ENCODE measurements at regions of chr2 and their contacts with region 1.

Region 1: DNA sequence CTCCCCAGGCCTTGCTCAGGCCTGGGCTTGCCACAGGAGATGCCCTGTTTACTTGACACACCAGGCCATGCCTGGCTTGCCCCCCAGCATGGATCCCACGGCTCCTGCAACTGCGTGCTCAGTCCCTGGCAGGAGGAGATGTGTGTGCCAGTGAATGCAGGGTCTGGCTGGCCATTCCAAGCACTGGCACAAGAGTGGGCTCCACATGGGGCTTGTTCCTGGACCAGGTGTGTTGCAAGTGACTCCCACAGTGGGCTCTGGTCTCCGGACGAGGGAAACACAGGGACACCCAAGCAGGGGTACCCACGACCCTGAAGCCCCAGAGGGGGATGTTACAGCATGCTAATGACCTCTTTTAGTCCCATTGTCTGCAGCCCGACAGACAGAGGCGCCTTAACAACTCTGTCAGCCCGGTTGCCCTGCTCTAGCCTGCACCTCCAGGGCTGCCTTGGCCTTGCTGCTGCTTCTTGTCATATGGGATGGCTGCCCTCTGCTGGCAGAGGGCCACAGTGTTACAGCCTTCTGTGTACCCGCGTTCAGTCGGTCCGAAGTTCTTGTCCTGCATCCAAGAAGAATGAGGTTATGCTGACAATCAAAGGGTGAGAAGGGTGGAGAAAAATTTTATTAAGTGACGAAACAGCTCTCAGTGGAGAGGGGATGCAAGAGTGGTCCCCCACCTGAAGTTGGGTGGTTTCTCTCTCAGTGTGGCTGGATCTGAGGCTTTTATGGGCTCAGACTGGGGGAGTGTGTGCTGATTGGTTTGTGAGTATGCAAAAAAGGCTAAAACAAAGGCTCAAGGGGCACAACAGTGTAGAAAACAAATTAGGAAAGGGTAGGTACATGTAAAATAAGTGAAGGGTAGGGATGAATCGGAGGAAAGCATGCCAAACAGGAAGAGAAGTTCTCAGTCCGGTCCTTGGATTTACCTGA is 180.4 kb downstream of the MBD5 start:
- DNase-seq: peak; percentile 66
- ATAC-seq: peak; percentile 88
- H3K4me3 ChIP-seq: no peak overlapping the region
- H3K27ac ChIP-seq: no peak overlapping the region
- H3K4me1 ChIP-seq: no peaks in the 10 kb centered on the region
- H3K27me3 ChIP-seq: no peaks in the 10 kb centered on the region
- CTCF ChIP-seq: peak; percentile 78

Region 2: DNA sequence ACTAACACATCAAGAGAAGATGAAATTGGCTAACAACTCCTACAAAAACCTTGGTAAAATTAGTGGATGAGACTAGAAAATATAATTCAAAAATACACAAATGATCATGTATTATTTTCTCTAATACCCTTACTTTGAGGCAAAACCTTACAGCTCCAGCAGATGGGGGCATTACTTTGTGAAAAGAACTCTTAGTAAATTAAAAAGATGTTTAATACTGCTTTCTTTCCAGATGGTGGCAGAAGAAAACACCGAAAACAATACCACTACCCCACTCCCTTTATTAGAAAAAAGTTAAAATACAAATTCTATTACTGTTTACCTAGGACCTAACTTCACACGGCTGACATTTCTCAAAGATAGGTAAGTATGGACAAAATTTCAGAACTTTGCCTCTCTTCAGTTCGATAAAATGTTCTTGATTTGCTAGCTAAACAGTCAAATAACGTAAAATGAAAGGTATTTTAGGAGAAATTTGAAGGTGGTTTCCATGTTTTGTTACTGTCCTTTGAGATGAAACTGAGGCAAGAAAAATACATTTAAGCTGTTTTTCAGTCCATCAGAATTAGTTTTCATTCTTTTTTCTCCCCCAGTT is 211.4 kb before region 1 on chr2:
- CTCF ChIA-PET with region 1: no interaction called
- POLR2A ChIA-PET with region 1: no interaction called
- intact Hi-C with region 1: loop called (anchors 5 kb)
- DNase-seq: peak; percentile 66
- ATAC-seq: peak; percentile 70
- H3K4me3 ChIP-seq: no peak overlapping the region
- H3K27ac ChIP-seq: no peak overlapping the region
- H3K4me1 ChIP-seq: no peaks in the 10 kb centered on the region
- H3K27me3 ChIP-seq: no peaks in the 10 kb centered on the region
- CTCF ChIP-seq: peak; percentile 93

Region 3: DNA sequence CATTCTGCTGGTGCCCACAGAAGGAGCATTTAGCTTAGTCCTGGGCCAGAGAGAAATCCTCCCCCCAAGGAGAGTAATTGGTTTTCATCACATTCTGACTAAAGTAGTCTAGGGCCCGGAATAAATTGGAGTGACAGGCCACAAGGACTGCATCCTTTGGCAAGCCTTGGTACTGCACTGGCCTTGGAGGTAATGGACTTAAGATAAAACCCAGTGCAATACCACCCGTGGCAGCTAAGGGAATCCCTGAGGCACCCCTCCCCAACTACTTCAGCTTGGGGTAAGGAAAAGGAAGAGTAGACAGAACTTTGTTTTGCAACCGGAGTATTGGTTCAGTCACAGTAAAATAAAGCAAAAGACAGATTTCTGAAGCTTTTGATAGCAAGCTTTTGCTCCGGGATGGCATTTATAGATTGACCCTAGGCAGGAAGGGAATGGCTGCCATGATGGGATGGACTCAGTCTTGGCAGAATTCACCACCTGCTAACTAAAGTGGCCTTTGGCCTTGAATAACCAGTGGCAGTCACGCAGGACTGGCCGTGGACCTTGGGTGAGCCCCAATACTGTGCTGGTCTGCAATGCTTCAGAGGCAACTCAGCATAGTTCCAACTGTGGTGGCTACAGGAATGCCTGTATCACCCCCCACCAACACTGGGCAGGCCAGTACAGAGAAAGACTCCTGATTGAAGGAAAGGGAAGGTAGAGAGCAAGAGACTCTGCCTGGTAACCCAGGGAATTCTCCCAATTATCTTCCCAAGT is 194.9 kb before region 1 on chr2:
- CTCF ChIA-PET with region 1: no interaction called
- POLR2A ChIA-PET with region 1: no interaction called
- intact Hi-C with region 1: no loop called
- DNase-seq: no peak
- ATAC-seq: no peak
- H3K4me3 ChIP-seq: no peak overlapping the region
- H3K27ac ChIP-seq: no peak overlapping the region
- H3K4me1 ChIP-seq: 0 out of 2 replicates have a peak, but pooled peaks cover 3% of the 10 kb centered on the region
- H3K27me3 ChIP-seq: no peaks in the 10 kb centered on the region
- CTCF ChIP-seq: no peak

Region 4: DNA sequence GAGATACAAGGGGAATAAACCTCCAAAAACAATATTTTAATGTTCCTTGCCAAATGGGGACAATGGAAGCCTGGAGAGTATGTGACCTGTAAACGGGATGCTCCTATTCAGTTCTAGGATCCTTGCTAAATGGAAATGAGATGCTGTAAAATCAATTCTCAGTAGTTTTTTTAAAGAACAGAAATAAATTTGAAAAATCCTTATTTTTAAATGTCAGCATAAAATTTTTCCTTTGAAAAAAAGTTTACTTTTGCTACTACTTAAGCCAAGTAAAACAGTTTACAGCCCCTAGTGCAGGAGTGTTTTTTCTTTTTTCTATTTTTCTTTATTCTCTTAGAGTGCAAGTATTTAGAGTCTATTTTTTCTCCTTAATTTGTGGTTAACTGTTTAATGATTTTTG is 21.6 kb before region 1 on chr2:
- CTCF ChIA-PET with region 1: no interaction called
- POLR2A ChIA-PET with region 1: no interaction called
- intact Hi-C with region 1: loop called (anchors 2 kb)
- DNase-seq: no peak
- ATAC-seq: no peak
- H3K4me3 ChIP-seq: no peak overlapping the region
- H3K27ac ChIP-seq: no peak overlapping the region
- H3K4me1 ChIP-seq: no peaks in the 10 kb centered on the region
- H3K27me3 ChIP-seq: no peaks in the 10 kb centered on the region
- CTCF ChIP-seq: no peak

Region 5: DNA sequence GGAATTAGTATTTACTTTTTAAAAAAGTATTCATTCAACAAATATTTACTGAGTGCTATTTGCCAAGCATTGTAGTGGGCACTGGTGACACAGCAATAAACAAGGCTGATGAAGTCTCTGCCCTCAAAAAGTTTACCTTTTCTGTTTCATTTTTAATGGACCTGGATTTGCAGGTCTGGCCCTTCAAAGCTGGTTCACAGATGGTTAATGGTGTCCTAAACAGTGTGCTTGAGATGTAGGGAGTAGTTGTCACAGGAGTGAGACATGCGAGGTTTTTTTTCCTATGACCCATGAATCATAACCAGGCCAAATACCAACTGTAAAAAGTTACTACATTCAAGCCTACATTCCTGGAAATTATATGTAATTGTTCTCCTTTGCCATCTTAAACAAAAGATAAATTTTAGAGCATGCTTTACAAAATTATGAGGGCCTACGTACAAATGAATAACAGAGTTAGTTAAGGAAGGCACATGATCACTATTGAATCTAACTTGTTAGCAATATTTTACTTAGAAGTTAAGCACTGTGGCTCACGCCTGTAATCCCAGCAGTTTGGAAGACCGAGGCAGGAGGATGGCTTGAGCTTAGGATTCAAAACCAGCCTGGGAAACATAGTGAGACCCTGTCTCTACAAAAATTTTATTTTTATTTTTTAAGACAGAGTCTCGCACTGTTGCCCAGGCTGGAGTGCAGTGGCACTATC is 43.4 kb after region 1 on chr2:
- CTCF ChIA-PET with region 1: no interaction called
- POLR2A ChIA-PET with region 1: no interaction called
- intact Hi-C with region 1: no loop called
- DNase-seq: peak; percentile 73
- ATAC-seq: peak; percentile 91
- H3K4me3 ChIP-seq: 0 out of 2 replicates have a peak overlapping the region, but pooled peaks have one; percentile 7
- H3K27ac ChIP-seq: peak overlapping the region; percentile 55
- H3K4me1 ChIP-seq: peaks cover 24% of the 10 kb centered on the region
- H3K27me3 ChIP-seq: no peaks in the 10 kb centered on the region
- CTCF ChIP-seq: no peak